ENCODE measurements at regions of chr1 and their contacts with region 1.

Region 1: GRCh38 chr1:11907275-11908094 is 18.7 kb downstream of the KIAA2013 start:
- DNase-seq: peak; percentile 74
- ATAC-seq: peak; percentile 47
- H3K4me3 Mint-ChIP-seq: peak overlapping the region; percentile 94
- H3K27ac Mint-ChIP-seq: peak overlapping the region; percentile 100
- H3K4me1 Mint-ChIP-seq: peaks cover 21% of the 10 kb centered on the region
- H3K27me3 Mint-ChIP-seq: no peaks in the 10 kb centered on the region
- CTCF ChIP-seq: no peak

Region 2: DNA sequence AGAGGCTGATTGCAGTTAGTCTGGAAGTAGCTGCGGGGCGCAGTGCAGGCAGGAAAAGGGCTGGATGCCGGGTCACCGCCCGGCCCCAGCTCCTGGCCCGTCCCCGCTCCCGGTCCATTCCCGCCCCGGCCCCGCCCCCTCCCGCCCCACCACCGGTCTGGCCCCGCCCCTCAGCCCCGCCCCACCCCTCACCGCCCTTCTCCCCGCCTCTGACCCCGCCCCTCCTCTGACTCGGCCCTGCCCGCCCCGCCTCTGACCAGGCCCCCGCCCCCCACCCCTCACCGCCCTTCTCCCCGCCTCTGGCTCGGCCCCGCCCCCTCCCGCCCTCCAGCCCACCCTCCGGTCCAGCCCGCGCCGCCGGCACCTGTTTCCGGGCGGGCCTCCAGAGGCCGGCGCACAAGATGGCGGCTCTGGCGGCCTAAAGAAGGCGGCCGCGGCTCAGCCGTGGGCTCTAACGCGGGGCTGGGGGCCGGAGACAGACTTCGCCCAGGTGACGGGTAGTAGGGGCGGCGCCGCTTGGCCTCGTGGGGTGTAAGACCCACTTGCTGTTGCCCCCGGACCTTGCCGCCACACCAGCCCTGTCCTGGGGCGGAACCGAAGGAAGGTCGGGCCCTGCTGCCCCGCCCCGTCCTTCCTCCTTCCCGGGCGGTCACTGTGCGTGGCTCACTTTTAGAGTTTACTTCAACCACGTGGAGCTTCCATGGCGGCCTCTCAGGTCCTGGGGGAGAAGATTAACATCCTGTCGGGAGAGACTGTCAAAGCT is 634.5 kb before region 1 on chr1 and contains the start of gene UBIAD1:
- CTCF ChIA-PET with region 1: no interaction called
- POLR2A ChIA-PET with region 1: interaction called, 21 read pairs
- intact Hi-C with region 1: loop called (anchors 2 kb)
- DNase-seq: peak; percentile 80
- ATAC-seq: peak; percentile 86
- H3K4me3 Mint-ChIP-seq: peak within 1 kb of the TSS; percentile 93
- H3K27ac Mint-ChIP-seq: peak within 1 kb of the TSS; percentile 96
- H3K4me1 Mint-ChIP-seq: peaks cover 35% of the 10 kb centered on the region
- H3K27me3 Mint-ChIP-seq: no peaks in the 10 kb centered on the region
- CTCF ChIP-seq: no peak
- total RNA-seq, gene UBIAD1: 23.3 and 27.8 TPM in 2 replicates

Region 3: GRCh38 chr1:11719313-11720032 is 188.0 kb before region 1 on chr1:
- CTCF ChIA-PET with region 1: no interaction called
- POLR2A ChIA-PET with region 1: interaction called, 24 read pairs
- intact Hi-C with region 1: no loop called
- DNase-seq: peak; percentile 78
- ATAC-seq: peak; percentile 89
- H3K4me3 Mint-ChIP-seq: peak overlapping the region; percentile 86
- H3K27ac Mint-ChIP-seq: peak overlapping the region; percentile 94
- H3K4me1 Mint-ChIP-seq: peaks cover 13% of the 10 kb centered on the region
- H3K27me3 Mint-ChIP-seq: no peaks in the 10 kb centered on the region
- CTCF ChIP-seq: peak; percentile 87

Region 4: DNA sequence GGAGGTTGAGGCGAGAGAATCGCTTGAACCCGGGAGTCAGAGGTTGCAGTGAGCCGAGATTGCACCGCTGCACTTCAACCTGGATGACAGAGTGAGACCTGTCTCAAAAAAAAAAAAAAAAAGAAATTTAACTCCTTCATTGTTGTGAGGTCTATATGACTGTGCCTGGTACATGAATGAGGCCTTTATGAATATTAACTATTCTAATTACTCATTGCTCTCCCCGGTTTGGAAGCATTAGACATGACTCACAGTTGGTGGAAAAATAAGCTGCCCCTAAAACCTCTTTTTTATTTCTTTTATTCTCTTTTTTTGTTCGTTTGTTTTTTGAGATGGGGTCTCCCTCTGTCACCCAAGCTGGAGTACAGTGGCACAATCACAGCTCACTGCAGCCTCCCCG is 52.1 kb before region 1 on chr1:
- CTCF ChIA-PET with region 1: no interaction called
- POLR2A ChIA-PET with region 1: interaction called, 11 read pairs
- intact Hi-C with region 1: no loop called
- DNase-seq: no peak
- ATAC-seq: no peak
- H3K4me3 Mint-ChIP-seq: no peak overlapping the region
- H3K27ac Mint-ChIP-seq: no peak overlapping the region
- H3K4me1 Mint-ChIP-seq: no peaks in the 10 kb centered on the region
- H3K27me3 Mint-ChIP-seq: peaks cover 30% of the 10 kb centered on the region
- CTCF ChIP-seq: no peak

Region 5: GRCh38 chr1:11967028-11967547 is 59.6 kb after region 1 on chr1:
- CTCF ChIA-PET with region 1: interaction called, 12 read pairs
- POLR2A ChIA-PET with region 1: interaction called, 72 read pairs
- intact Hi-C with region 1: loop called (anchors 1 kb)
- DNase-seq: no peak
- ATAC-seq: peak; percentile 75
- H3K4me3 Mint-ChIP-seq: no peak overlapping the region
- H3K27ac Mint-ChIP-seq: no peak overlapping the region
- H3K4me1 Mint-ChIP-seq: no peaks in the 10 kb centered on the region
- H3K27me3 Mint-ChIP-seq: no peaks in the 10 kb centered on the region
- CTCF ChIP-seq: no peak

Region 6: DNA sequence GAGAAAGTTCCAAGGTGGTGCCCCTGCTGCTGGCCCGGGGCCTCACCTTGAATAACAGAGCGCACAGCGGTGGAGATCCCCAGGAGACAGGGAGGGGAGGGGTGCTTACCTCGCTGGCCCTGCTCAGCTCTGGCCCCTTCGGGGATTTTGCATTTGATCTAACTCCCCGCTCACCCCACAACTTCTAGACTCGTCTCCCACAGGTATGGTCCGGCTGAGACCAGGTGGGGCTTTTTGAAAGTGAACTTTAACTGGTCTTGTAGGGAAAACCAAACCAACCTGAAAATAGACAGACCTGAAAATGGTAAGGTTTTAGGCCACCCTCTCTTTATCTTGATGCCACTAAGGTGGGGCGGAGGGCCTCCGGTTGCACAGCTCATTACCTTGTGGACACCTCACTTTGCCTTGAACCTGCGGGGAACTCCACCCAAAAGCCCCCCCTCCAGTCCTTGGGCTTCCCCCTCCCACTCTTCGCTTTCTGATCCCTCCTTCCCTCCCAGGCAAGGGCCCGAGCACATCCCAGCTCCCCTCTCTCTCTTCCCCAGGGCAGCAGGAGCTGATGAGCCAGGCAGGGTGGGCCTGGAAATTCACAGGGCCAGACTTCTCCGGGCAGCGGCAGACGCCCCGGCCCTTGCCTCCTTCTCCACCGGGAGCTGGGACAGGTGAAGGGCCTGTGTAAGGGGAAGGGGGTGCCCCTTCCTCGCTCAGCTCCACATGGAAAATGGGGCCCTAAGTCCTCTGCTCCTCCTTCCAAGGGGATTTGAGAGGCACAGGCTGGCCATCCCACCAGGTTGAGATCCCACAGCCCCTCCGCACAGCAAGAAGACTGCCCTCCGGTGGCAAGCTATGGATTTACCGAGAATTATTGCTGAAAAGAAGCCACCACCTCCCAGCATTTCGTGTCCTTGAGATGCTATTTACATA is 171.7 kb after region 1 on chr1:
- CTCF ChIA-PET with region 1: no interaction called
- POLR2A ChIA-PET with region 1: interaction called, 83 read pairs
- intact Hi-C with region 1: loop called (anchors 2 kb)
- DNase-seq: peak; percentile 35
- ATAC-seq: peak; percentile 76
- H3K4me3 Mint-ChIP-seq: peak overlapping the region; percentile 70
- H3K27ac Mint-ChIP-seq: peak overlapping the region; percentile 87
- H3K4me1 Mint-ChIP-seq: peaks cover 38% of the 10 kb centered on the region
- H3K27me3 Mint-ChIP-seq: no peaks in the 10 kb centered on the region
- CTCF ChIP-seq: no peak

Measured in activated B cell treated with CpG ODN at 0.5 μM for 24 hours (primary cell).